ENCODE measurements at regions of chr13 and their contacts with region 1.

Region 1: GRCh38 chr13:50457415-50458393 is 385.8 kb downstream of the DLEU7 start:
- DNase-seq: no peak

Region 2: DNA sequence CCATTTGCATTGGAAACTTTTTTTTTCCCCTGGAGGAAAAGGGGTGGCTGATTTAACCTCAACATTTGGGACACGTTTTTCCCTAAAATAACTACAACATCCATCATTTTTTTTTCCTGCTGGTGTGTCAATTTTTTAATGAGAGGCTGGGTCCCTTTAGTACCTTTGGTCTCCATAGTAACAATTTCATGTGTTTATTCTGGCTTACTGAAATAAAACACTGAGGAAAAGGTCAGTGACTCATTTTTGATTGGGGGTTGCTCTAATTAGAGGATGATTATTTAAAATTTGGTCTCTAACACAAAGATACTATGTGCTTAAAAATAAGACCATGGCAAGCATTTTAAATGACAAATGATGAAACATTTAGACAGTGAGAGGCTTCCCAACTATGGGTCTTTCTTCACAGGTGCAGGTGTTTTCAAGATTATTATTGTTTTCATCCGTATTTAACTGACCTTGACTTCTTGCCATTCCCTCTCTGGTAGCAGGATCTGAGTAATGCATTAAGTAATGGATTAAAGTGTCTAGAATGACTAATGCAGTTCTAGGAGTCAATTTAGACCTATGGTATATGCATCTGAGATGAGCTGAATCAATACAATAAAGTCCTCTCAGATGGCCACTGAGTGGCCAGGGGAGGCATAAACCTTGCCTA is 36.1 kb before region 1 on chr13:
- intact Hi-C with region 1: loop called (anchors 5 kb)
- DNase-seq: no peak

Region 3: DNA sequence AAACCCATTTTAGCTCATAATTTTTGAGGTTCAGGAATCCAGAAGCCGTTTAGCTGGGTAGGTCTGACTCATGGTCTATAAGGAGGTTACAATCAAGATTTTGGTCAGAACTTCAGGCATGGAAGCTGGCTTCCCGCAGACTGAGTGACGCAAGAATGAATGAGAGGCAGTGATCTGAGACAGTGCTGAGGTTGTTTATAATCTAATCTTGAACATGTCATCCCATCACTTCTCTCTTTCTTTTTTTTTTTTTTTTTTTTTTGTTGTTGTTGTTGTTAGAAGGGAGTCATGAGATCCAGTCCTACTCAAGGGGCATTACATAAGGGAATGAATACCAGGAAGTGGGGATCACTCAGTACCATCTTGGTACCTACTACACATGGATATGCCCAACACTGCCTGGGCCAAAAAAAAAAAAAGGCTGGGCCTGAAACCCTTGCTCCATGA is 168.4 kb after region 1 on chr13:
- intact Hi-C with region 1: no loop called
- DNase-seq: no peak

Measured in cardiac septum (tissue), 1 donor.